WTC11 (cell line): ENCODE measurements at regions of chr2 and their contacts with region 1.

Region 1: GRCh38 chr2:64488050-64488974 is 34.4 kb downstream of the LGALSL start:
- DNase-seq: peak; percentile 91
- ATAC-seq: peak; percentile 82
- H3K4me3 Mint-ChIP-seq: no peak overlapping the region
- H3K27ac Mint-ChIP-seq: no peak overlapping the region
- H3K4me1 Mint-ChIP-seq: peaks cover 31% of the 10 kb centered on the region
- H3K27me3 Mint-ChIP-seq: no peaks in the 10 kb centered on the region
- CTCF ChIP-seq: peak; percentile 94

Region 2: DNA sequence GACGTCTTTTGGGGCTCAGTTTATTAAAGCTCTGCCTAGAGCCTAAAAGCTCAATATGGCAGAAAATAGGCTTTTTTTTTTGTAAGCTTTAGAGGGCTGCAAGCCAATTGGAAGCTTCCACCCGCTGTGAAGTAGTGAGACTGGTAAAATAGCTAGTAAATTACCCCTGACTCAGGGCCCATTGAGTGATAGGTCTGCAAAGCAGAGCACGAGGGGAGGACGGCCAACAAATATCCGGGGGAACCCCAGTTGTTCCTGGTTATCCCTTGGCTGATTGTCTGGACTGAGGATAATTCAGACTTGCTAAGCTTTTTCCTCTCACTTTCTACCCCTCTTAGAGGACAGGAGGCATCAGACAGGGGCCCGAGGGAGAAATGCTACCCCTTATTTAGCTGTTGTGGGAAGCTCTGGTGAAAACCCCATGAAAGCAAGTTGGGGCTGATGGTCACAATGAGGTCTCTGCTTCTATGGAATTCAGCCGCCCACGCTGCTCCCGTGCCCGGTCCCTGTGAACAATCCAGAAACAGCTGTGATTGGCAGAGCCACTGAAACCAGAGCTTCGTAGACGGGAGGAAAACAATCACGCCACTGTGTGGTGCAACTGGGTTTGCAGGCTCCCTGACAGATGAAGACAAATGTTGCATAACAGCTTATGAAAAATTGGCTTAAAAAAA is 176.2 kb before region 1 on chr2:
- CTCF ChIA-PET with region 1: interaction called, 11 read pairs
- POLR2A ChIA-PET with region 1: no interaction called
- DNase-seq: no peak
- ATAC-seq: peak; percentile 63
- H3K4me3 Mint-ChIP-seq: no peak overlapping the region
- H3K27ac Mint-ChIP-seq: no peak overlapping the region
- H3K4me1 Mint-ChIP-seq: peaks cover 31% of the 10 kb centered on the region
- H3K27me3 Mint-ChIP-seq: peaks cover 10% of the 10 kb centered on the region
- CTCF ChIP-seq: no peak

Region 3: DNA sequence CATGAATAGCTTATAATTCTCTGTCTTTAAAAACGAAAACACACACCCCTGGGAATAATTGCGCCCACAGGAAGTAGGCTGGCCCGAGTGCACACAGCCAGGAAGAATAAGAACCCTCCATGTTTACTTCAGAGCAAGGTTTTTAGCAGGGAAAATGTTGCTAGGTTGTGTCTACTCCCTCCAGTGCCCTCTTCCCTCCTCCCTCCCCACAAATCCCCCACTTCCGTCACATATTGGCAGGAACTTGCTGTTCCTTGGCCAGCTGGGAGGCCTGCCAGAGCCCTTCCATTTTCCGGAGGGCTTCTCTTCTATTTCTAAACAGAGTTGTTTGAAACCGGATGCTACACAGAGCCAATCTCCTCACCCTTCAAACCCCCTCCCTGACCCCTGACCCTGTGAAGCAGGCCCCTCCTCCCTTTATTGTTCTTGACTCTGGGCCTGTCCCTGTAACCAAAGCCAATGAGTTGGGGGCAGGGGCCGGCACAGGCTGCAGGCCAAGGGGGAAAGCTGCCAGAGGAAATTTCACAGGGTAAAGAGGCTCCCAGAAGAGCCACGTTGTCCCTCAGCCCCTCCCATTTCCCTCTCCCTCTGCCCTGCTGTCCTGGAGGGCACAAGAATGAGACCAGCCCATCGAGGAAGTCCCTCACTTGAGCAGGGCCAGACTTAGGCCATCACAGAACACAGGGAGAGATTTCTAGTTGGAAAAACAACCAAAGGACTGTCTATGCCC is 84.1 kb before region 1 on chr2:
- CTCF ChIA-PET with region 1: interaction called, 12 read pairs
- POLR2A ChIA-PET with region 1: no interaction called
- DNase-seq: peak; percentile 77
- ATAC-seq: peak; percentile 98
- H3K4me3 Mint-ChIP-seq: peak overlapping the region; percentile 58
- H3K27ac Mint-ChIP-seq: peak overlapping the region; percentile 97
- H3K4me1 Mint-ChIP-seq: peaks cover 62% of the 10 kb centered on the region
- H3K27me3 Mint-ChIP-seq: no peaks in the 10 kb centered on the region
- CTCF ChIP-seq: no peak

Region 4: GRCh38 chr2:64463781-64464180 is 24.5 kb before region 1 on chr2:
- CTCF ChIA-PET with region 1: interaction called, 20 read pairs
- POLR2A ChIA-PET with region 1: no interaction called
- DNase-seq: no peak
- ATAC-seq: no peak
- H3K4me3 Mint-ChIP-seq: no peak overlapping the region
- H3K27ac Mint-ChIP-seq: no peak overlapping the region
- H3K4me1 Mint-ChIP-seq: peaks cover 18% of the 10 kb centered on the region
- H3K27me3 Mint-ChIP-seq: no peaks in the 10 kb centered on the region; the same call in 1 of the 2 replicates
- CTCF ChIP-seq: no peak

Region 5: GRCh38 chr2:64498438-64498837 is 10.1 kb after region 1 on chr2:
- CTCF ChIA-PET with region 1: interaction called, 15 read pairs
- POLR2A ChIA-PET with region 1: no interaction called
- DNase-seq: no peak
- ATAC-seq: no peak
- H3K4me3 Mint-ChIP-seq: no peak overlapping the region
- H3K27ac Mint-ChIP-seq: no peak overlapping the region
- H3K4me1 Mint-ChIP-seq: peaks cover 21% of the 10 kb centered on the region
- H3K27me3 Mint-ChIP-seq: no peaks in the 10 kb centered on the region
- CTCF ChIP-seq: no peak

Region 6: GRCh38 chr2:64516628-64517510 is 28.6 kb after region 1 on chr2:
- CTCF ChIA-PET with region 1: interaction called, 19 read pairs
- POLR2A ChIA-PET with region 1: no interaction called
- DNase-seq: no peak
- ATAC-seq: no peak
- H3K4me3 Mint-ChIP-seq: no peak overlapping the region
- H3K27ac Mint-ChIP-seq: no peak overlapping the region
- H3K4me1 Mint-ChIP-seq: no peaks in the 10 kb centered on the region; the same call in 1 of the 2 replicates
- H3K27me3 Mint-ChIP-seq: no peaks in the 10 kb centered on the region; the same call in 1 of the 2 replicates
- CTCF ChIP-seq: no peak